ENCODE measurements at regions of chrX and their contacts with region 1.

Region 1: DNA sequence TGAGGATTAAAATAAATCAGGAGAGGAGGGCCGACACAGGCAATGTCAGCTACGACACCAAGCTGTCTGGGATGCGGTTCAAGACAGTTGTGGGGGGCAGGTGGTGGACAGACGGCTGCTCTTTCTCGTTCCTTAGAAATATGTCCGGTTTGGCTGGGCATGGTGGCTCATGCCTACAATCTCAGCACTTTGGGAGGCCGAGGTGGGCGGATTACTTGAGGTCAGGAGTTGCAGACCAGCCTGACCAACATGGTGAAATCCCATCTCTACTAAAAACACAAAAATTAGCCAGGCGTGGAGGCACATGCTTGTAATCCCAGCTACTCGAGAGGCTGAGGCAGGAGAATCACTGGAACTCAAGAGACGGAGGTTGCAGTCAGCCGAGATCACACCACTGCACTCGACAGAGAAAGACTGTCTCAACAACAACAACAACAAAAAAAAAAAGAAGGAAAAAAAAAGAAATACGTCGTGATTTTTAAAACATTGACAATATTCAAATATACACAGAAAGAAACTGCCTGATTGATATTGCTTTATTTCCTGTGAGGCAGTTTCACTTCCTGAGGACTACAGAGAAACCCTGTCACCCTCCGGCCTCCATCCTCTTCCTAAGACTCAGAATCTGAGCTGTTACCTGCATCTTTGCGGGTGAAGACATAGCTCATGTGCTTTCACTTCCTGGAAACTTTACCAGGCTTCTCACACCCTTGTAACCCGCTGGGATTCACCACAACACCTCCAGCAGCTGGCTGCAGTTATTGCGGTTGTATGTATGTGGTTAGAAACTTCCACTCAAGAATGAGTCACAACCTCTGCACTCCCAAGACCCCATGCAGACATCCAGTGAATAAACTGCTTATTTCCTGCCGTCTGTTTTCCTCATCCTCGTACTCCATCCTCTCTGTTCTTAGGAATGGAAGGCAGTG is 63.8 kb upstream of the STS start:
- DNase-seq: peak in 8 of 9 donors; percentile 45 to 79 (median 64)
- ATAC-seq: peak; percentile 92
- H3K4me3 ChIP-seq: peak overlapping the region; percentile 17
- H3K4me3 Mint-ChIP-seq: peak overlapping the region; percentile 69 to 89 (median 75)
- H3K27ac ChIP-seq: peak overlapping the region; percentile 34
- H3K27ac Mint-ChIP-seq: peak overlapping the region; percentile 40 to 97 (median 86)
- H3K4me1 ChIP-seq: peaks cover 26 to 29% of the 10 kb centered on the region in 2 donors
- H3K4me1 Mint-ChIP-seq: peaks cover 26 to 91% (median 52%) of the 10 kb centered on the region in 7 donors
- H3K27me3 ChIP-seq: no peaks in the 10 kb centered on the region
- H3K27me3 Mint-ChIP-seq: no peaks in the 10 kb centered on the region

Region 2: GRCh38 chrX:6021316-6022091 is 1062.2 kb before region 1 on chrX:
- CTCF ChIA-PET with region 1: no interaction called
- POLR2A ChIA-PET with region 1: no interaction called
- intact Hi-C with region 1: loop called in 1 of 2 experiments (anchors 10 kb)
- DNase-seq: peak in 5 of 9 donors; percentile 8 to 46 (median 21)
- ATAC-seq: no peak
- H3K4me3 ChIP-seq: no peak overlapping the region
- H3K4me3 Mint-ChIP-seq: no peak overlapping the region
- H3K27ac ChIP-seq: no peak overlapping the region
- H3K27ac Mint-ChIP-seq: peak overlapping the region in 1 of 9 donors; percentile 32
- H3K4me1 ChIP-seq: no peaks in the 10 kb centered on the region
- H3K4me1 Mint-ChIP-seq: peaks cover 0 to 6% (median 4%) of the 10 kb centered on the region in 7 donors
- H3K27me3 ChIP-seq: no peaks in the 10 kb centered on the region
- H3K27me3 Mint-ChIP-seq: peaks cover 0 to 11% (median 0%) of the 10 kb centered on the region in 5 donors

Region 3: GRCh38 chrX:6558979-6559378 is 524.8 kb before region 1 on chrX:
- CTCF ChIA-PET with region 1: no interaction called
- POLR2A ChIA-PET with region 1: no interaction called
- intact Hi-C with region 1: no loop called
- DNase-seq: no peak
- ATAC-seq: no peak
- H3K4me3 ChIP-seq: no peak overlapping the region
- H3K4me3 Mint-ChIP-seq: no peak overlapping the region
- H3K27ac ChIP-seq: no peak overlapping the region
- H3K27ac Mint-ChIP-seq: no peak overlapping the region
- H3K4me1 ChIP-seq: no peaks in the 10 kb centered on the region
- H3K4me1 Mint-ChIP-seq: no peaks in the 10 kb centered on the region
- H3K27me3 ChIP-seq: no peaks in the 10 kb centered on the region
- H3K27me3 Mint-ChIP-seq: no peaks in the 10 kb centered on the region

Region 4: GRCh38 chrX:7059214-7059838 is 24.4 kb before region 1 on chrX:
- CTCF ChIA-PET with region 1: no interaction called
- POLR2A ChIA-PET with region 1: no interaction called
- intact Hi-C with region 1: loop called in 1 of 2 experiments (anchors 2 kb)
- DNase-seq: peak in 3 of 9 donors; percentile 8 to 50 (median 36)
- ATAC-seq: peak; percentile 49
- H3K4me3 ChIP-seq: no peak overlapping the region
- H3K4me3 Mint-ChIP-seq: peak overlapping the region in 9 of 10 donors; percentile 2 to 68 (median 40)
- H3K27ac ChIP-seq: peak overlapping the region; percentile 35
- H3K27ac Mint-ChIP-seq: peak overlapping the region; percentile 31 to 84 (median 68)
- H3K4me1 ChIP-seq: peaks cover 0 to 8% of the 10 kb centered on the region in 2 donors
- H3K4me1 Mint-ChIP-seq: peaks cover 21 to 96% (median 56%) of the 10 kb centered on the region in 7 donors
- H3K27me3 ChIP-seq: no peaks in the 10 kb centered on the region
- H3K27me3 Mint-ChIP-seq: no peaks in the 10 kb centered on the region

Region 5: GRCh38 chrX:7068939-7069371 is 14.8 kb before region 1 on chrX:
- CTCF ChIA-PET with region 1: no interaction called
- POLR2A ChIA-PET with region 1: interaction called, 3 read pairs
- intact Hi-C with region 1: loop called in 1 of 2 experiments (anchors 1 kb)
- DNase-seq: peak in 4 of 9 donors; percentile 24 to 31 (median 27)
- ATAC-seq: peak; percentile 50
- H3K4me3 ChIP-seq: no peak overlapping the region
- H3K4me3 Mint-ChIP-seq: peak overlapping the region; percentile 13 to 82 (median 60)
- H3K27ac ChIP-seq: peak overlapping the region; percentile 12
- H3K27ac Mint-ChIP-seq: peak overlapping the region; percentile 26 to 84 (median 74)
- H3K4me1 ChIP-seq: peaks cover 0 to 4% of the 10 kb centered on the region in 2 donors
- H3K4me1 Mint-ChIP-seq: peaks cover 20 to 75% (median 44%) of the 10 kb centered on the region in 7 donors
- H3K27me3 ChIP-seq: no peaks in the 10 kb centered on the region
- H3K27me3 Mint-ChIP-seq: no peaks in the 10 kb centered on the region

Region 6: GRCh38 chrX:7147978-7148824 is 64.5 kb after region 1 on chrX and contains the start of gene PUDP:
- CTCF ChIA-PET with region 1: no interaction called
- POLR2A ChIA-PET with region 1: interaction called, 3 read pairs
- intact Hi-C with region 1: loop called (anchors 1 to 2 kb)
- DNase-seq: peak; percentile 80 to 96 (median 89)
- ATAC-seq: peak; percentile 90
- H3K4me3 ChIP-seq: peak within 1 kb of the TSS; percentile 99
- H3K4me3 Mint-ChIP-seq: peak within 1 kb of the TSS; percentile 79 to 95 (median 90)
- H3K27ac ChIP-seq: peak within 1 kb of the TSS; percentile 69
- H3K27ac Mint-ChIP-seq: peak within 1 kb of the TSS; percentile 75 to 96 (median 90)
- H3K4me1 ChIP-seq: no peaks in the 10 kb centered on the region
- H3K4me1 Mint-ChIP-seq: peaks cover 9 to 47% (median 26%) of the 10 kb centered on the region in 7 donors
- H3K27me3 ChIP-seq: no peaks in the 10 kb centered on the region
- H3K27me3 Mint-ChIP-seq: no peaks in the 10 kb centered on the region
- total RNA-seq, gene PUDP: 6.2 to 12.9 (median 10.5) TPM

Region 7: GRCh38 chrX:7925867-7926472 is 842.2 kb after region 1 on chrX:
- CTCF ChIA-PET with region 1: no interaction called
- POLR2A ChIA-PET with region 1: no interaction called
- intact Hi-C with region 1: loop called (anchors 5 to 10 kb)
- DNase-seq: peak; percentile 5 to 79 (median 62)
- ATAC-seq: peak; percentile 67
- H3K4me3 ChIP-seq: no peak overlapping the region
- H3K4me3 Mint-ChIP-seq: peak overlapping the region; percentile 38 to 99 (median 90)
- H3K27ac ChIP-seq: no peak overlapping the region
- H3K27ac Mint-ChIP-seq: peak overlapping the region; percentile 33 to 99 (median 54)
- H3K4me1 ChIP-seq: peaks cover 6 to 11% of the 10 kb centered on the region in 2 donors
- H3K4me1 Mint-ChIP-seq: peaks cover 0 to 37% (median 20%) of the 10 kb centered on the region in 7 donors
- H3K27me3 ChIP-seq: no peaks in the 10 kb centered on the region
- H3K27me3 Mint-ChIP-seq: no peaks in the 10 kb centered on the region

Measured in naive thymus-derived CD4-positive, alpha-beta T cell (primary cell).